Posterior vena cava (tissue), 2 donors: ENCODE measurements at regions of chr5 and their contacts with region 1.

Region 1: GRCh38 chr5:167255926-167256325 is 1035.5 kb upstream of the WWC1 start:
- DNase-seq: no peak

Region 2: DNA sequence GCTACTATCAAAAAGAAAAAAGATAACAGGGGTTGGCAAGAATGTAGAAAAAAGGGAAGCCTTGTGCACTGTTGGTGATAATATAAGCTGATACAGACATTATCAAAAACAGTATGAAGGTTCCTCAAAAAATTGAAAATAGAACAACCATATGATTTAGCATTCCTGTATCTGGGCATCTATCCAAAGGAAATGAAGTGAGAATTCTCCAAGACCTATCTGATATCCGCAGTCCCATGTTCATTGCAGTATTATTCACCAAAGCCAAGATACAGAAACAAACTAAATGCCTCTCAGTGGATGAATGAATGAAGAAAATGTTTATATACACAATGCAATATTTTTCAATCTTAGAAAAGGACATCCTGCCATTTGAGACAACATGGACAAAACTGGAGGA is 1807.2 kb before region 1 on chr5:
- intact Hi-C with region 1: loop called in 1 of 2 experiments (anchors 5 kb)
- DNase-seq: no peak

Region 3: DNA sequence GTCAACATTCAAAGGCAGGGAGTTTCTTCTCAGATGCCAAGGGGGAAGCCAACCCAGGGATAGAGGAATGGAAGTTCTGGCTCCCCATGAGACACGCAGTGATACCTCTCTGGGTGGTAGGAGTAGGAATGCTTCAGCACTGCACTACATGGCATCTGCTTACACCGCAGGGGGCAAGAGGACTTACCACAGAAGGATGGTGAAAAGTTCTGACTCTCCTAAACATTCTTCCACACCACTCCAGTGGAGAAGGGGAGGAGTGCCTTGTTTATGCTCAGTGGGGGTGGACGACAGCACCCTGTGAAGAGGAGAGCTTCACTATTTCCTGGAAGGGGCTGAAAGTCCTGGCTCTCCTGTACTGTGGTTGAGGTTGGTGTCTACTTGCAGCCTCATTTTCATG is 24.2 kb after region 1 on chr5:
- intact Hi-C with region 1: no loop called
- DNase-seq: no peak

Region 4: GRCh38 chr5:167813389-167813788 is 557.5 kb after region 1 on chr5:
- intact Hi-C with region 1: no loop called
- DNase-seq: no peak